ENCODE measurements at regions of chr6 and their contacts with region 1.

Region 1: DNA sequence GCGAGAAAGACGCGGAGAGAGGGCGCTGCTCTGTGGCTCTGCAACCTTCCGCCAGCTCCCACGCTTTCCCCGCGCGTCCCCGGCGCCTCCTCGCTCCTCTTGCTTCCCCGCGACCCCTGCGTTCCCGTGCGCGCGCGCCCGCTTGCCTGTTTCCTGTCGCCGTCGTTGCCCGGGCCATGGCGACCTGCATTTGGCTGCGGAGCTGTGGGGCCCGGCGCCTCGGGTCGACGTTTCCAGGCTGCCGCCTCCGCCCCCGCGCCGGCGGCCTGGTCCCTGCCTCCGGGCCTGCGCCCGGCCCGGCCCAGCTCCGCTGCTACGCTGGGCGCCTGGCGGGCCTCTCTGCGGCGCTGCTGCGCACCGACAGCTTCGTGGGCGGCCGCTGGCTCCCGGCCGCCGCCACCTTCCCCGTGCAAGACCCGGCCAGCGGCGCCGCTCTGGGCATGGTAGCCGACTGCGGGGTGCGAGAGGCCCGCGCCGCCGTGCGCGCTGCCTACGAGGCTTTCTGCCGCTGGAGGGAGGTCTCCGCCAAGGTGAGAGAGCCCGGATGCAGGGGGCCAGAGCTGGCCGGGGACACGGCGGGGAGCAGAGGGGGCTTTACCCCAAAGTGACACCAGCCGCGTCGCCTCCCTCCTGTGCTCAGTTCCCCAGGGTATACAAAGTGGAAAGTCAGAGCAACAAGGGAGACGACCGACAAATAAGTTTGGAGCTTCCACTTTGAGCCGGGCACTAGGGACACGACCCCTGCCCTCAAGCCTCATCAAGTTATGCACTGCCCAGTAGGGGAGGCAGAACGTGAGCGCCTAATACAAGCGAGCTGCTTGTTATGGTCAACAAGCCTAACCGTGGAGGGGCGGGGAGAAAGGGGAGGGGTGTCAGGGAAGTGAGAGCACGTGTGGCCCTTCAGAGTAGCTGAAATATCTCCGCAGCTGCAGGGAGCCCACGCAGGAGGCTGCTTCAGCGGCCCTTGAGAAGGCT is at the start of gene ALDH5A1:
- DNase-seq: peak; percentile 70
- H3K4me3 Mint-ChIP-seq: peak within 1 kb of the TSS; percentile 80
- H3K27ac Mint-ChIP-seq: peak within 1 kb of the TSS; percentile 33
- H3K4me1 Mint-ChIP-seq: peaks cover 21% of the 10 kb centered on the region
- H3K27me3 Mint-ChIP-seq: peaks cover 3% of the 10 kb centered on the region
- total RNA-seq, gene ALDH5A1: 11.4 and 12.3 TPM in 2 replicates

Region 2: DNA sequence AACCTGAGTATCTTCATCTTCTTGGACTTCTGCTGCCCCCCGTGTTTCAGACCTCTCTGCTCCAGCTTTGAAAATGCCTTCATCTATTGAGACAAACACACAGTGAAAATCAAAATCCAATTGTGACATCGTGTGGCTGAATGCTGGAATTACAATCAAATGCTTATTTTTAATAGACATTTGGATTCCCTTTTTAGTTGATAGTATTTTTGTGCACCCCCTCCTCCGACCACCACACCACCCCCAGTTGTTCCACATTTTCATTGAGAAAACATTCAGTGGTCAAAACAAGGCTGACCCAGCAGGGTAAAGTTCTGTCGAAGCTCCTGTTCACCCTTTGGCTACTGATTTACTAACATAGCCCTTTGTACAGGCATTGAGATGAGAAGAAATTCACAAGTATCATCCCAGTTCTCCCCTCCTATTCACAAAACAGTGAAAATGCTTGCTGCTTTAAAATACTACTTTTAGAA is 290.1 kb before region 1 on chr6:
- intact Hi-C with region 1: no loop called
- DNase-seq: no peak
- H3K4me3 Mint-ChIP-seq: no peak overlapping the region
- H3K27ac Mint-ChIP-seq: no peak overlapping the region
- H3K4me1 Mint-ChIP-seq: no peaks in the 10 kb centered on the region
- H3K27me3 Mint-ChIP-seq: peaks cover 2% of the 10 kb centered on the region

Region 3: GRCh38 chr6:24402697-24403501 is 92.2 kb before region 1 on chr6 and contains the start of gene MRS2:
- intact Hi-C with region 1: loop called (anchors 2 kb)
- DNase-seq: peak; percentile 74
- H3K4me3 Mint-ChIP-seq: peak within 1 kb of the TSS; percentile 99
- H3K27ac Mint-ChIP-seq: peak within 1 kb of the TSS; percentile 83
- H3K4me1 Mint-ChIP-seq: peaks cover 25% of the 10 kb centered on the region
- H3K27me3 Mint-ChIP-seq: peaks cover 22% of the 10 kb centered on the region
- total RNA-seq, gene MRS2: 30.5 and 31.1 TPM in 2 replicates

Region 4: GRCh38 chr6:24630856-24631505 is 135.9 kb after region 1 on chr6:
- intact Hi-C with region 1: no loop called
- DNase-seq: no peak
- H3K4me3 Mint-ChIP-seq: no peak overlapping the region
- H3K27ac Mint-ChIP-seq: no peak overlapping the region
- H3K4me1 Mint-ChIP-seq: no peaks in the 10 kb centered on the region
- H3K27me3 Mint-ChIP-seq: peaks cover 40% of the 10 kb centered on the region

Region 5: DNA sequence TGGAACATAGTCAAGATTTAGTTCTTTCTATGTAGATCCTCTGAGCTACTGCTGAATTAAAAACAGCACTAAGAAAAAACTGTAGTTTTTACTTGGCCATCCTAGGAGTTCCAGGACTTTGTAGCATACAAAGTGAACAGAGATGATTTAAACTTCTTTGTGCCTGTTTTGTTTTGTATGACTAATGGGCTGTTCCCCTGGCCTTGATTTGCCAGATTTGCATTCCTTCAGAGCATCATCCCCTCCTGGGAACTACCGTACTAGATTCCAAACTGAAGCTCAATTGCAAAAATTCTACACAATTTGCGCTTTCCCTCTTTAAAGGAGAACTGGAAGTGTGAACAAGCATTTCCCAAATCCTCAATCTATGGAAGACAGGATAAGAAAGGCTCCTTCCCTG is 194.9 kb after region 1 on chr6:
- intact Hi-C with region 1: loop called (anchors 10 kb)
- DNase-seq: no peak
- H3K4me3 Mint-ChIP-seq: no peak overlapping the region
- H3K27ac Mint-ChIP-seq: no peak overlapping the region
- H3K4me1 Mint-ChIP-seq: peaks cover 14% of the 10 kb centered on the region
- H3K27me3 Mint-ChIP-seq: no peaks in the 10 kb centered on the region

Measured in activated T-helper 2 cell treated with anti-CD3 and anti-CD28 coated beads, Interferon-gamma antibody, Interleukin-2, Interleukin-4, amounts not matched to agents 10 μg/mL and 5 μg/mL and 100 μg/mL, durations not matched to agents 14 hours and 24 hours and 36 hours (primary cell).